Heart left ventricle (tissue), 16 donors: ENCODE measurements at regions of chr21 and their contacts with region 1.

Region 1: GRCh38 chr21:28215214-28215954 is 777.3 kb downstream of the LTN1 start:
- DNase-seq: peak in 3 of 5 donors; percentile 31 to 47 (median 44)
- ATAC-seq: peak; percentile 95 to 99 (median 98)
- H3K4me3 ChIP-seq: no peak overlapping the region
- H3K27ac ChIP-seq: peak overlapping the region; percentile 23 to 76 (median 62)
- H3K4me1 ChIP-seq: peaks cover 0 to 24% (median 11%) of the 10 kb centered on the region in 12 donors
- H3K27me3 ChIP-seq: no peaks in the 10 kb centered on the region
- CTCF ChIP-seq: no peak
- POLR2A ChIP-seq: no peak

Region 2: DNA sequence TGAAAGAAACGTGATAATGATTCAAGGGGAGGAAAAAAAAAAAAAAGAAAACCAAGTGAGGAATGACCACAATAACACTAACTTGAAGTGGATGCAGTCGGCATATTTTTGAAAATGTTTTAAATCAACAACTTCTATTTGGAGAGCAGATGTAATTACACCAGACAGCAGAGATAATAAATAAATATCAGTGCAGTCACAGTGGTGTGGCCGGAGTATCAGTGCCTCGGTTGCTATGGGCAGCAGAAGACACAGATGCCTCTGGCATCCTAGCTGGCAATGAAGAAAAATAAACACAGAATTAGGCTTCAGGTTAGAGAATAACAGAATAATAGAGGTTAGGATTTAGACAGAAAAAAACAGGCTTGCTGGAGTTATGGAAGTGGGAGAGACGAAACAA is 111.0 kb before region 1 on chr21:
- intact Hi-C with region 1: loop called in 1 of 10 experiments (anchors 10 kb)
- DNase-seq: peak in 1 of 5 donors; percentile 27
- ATAC-seq: peak in 3 of 4 donors; percentile 56 to 71 (median 64)
- H3K4me3 ChIP-seq: no peak overlapping the region
- H3K27ac ChIP-seq: peak overlapping the region in 1 of 12 donors; percentile 11
- H3K4me1 ChIP-seq: peaks cover 0 to 26% (median 9%) of the 10 kb centered on the region in 12 donors
- H3K27me3 ChIP-seq: no peaks in the 10 kb centered on the region
- CTCF ChIP-seq: no peak
- POLR2A ChIP-seq: no peak